K562 (cell line): ENCODE measurements at regions of chr22 and their contacts with region 1.

Region 1: DNA sequence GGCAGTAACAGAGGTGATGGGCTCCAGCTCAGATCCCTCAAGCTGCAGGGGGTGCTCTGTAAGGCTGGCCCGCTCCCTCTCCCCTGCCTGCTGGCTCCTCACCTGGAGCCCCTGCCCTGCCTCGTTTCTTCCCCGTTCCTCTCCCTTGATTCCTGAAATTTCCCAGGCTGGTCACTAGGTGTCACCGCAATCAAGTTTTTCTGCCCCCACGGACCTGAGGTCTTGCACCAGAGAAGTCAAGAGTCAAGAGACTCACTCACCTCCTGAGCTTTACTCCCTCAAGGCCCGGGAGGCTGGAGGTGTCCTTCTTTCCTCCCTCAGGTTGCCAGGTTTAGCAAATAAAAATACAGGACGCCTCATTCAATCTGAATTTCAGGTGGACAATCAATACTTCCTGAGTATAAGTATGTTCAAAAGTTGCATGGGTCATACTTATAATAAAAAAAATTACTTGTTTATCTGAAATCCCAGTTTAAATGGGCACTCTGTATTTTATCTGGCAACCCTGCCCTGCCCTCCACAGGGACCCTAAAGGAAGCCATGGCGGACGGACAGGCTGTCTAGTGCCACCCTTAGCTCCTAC is 69.2 kb downstream of the SCUBE1 start:
- DNase-seq: peak; percentile 58 to 69 (median 64)
- ATAC-seq: peak; percentile 82
- H3K4me3 ChIP-seq: no peak overlapping the region
- H3K27ac ChIP-seq: no peak overlapping the region
- H3K4me1 ChIP-seq: peaks cover 6 to 16% of the 10 kb centered on the region in 2 experiments; a peak in 3 of 5 replicates
- H3K27me3 ChIP-seq: peaks cover 15 to 46% of the 10 kb centered on the region in 2 experiments; a peak in 4 of 5 replicates
- CTCF ChIP-seq: peak; percentile 72 to 84 (median 74)
- EP300 ChIP-seq: no peak
- POLR2A ChIP-seq: no peak
- RAD21 ChIP-seq: peak; percentile 70 to 87

Region 2: DNA sequence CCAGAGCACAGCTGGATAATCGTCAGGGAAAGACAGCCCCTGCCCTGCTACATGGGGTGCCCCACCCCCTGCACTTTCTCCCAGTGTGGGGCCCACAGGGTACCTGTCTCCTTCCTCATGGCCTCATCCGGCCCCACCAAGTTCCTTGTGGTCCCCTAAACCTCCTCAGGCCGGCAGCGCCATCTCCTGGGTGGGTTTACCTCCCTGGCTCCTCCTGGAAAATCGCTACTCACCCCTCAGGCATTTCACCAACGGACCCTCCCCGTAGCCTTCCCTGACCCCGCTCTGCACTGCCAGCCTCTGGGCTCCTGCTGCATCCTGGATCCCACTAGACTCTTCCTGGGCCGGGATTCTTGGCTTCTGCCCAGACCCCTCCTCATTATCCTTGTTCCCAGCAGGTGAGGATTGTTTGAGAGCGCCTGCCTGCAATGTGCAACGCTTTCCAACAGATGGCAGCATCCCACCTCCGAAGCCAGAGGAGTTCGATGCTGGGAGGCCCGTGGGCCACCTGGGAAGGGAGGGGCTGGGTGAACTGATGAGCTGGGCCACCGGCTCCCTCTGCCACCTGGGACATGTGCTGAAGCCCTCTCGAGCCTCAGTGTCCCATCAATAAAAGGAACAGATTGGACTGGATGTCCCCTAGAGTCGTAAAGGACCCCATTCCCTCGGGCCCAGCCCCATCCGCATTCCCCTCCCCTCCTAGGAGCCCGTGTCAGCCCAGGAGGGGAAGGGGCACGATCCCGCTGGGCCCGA is 42.8 kb before region 1 on chr22:
- CTCF ChIA-PET with region 1: interaction called, 3 read pairs
- POLR2A ChIA-PET with region 1: no interaction called
- in situ Hi-C with region 1: no loop called
- intact Hi-C with region 1: loop called (anchors 5 kb)
- DNase-seq: peak; percentile 71 to 73 (median 73)
- ATAC-seq: peak; percentile 79
- H3K4me3 ChIP-seq: no peak overlapping the region
- H3K27ac ChIP-seq: no peak overlapping the region
- H3K4me1 ChIP-seq: peaks cover 0 to 41% of the 10 kb centered on the region in 2 experiments; a peak in 2 of 5 replicates
- H3K27me3 ChIP-seq: peaks cover 0 to 34% of the 10 kb centered on the region in 2 experiments; a peak in 2 of 5 replicates
- CTCF ChIP-seq: peak; percentile 74 to 95 (median 81)
- EP300 ChIP-seq: no peak
- POLR2A ChIP-seq: no peak
- RAD21 ChIP-seq: peak; percentile 80 to 89

Region 3: GRCh38 chr22:43346521-43346929 is 72.5 kb after region 1 on chr22:
- CTCF ChIA-PET with region 1: interaction called, 26 read pairs
- POLR2A ChIA-PET with region 1: no interaction called
- in situ Hi-C with region 1: no loop called
- intact Hi-C with region 1: loop called (anchors 1 kb)
- DNase-seq: peak; percentile 53 to 62 (median 58)
- ATAC-seq: peak; percentile 91
- H3K4me3 ChIP-seq: no peak overlapping the region
- H3K27ac ChIP-seq: no peak overlapping the region
- H3K4me1 ChIP-seq: peaks cover 9 to 21% of the 10 kb centered on the region in 2 experiments; a peak in 4 of 5 replicates
- H3K27me3 ChIP-seq: peaks cover 0 to 17% of the 10 kb centered on the region in 2 experiments; a peak in 4 of 5 replicates
- CTCF ChIP-seq: peak; percentile 69 to 72 (median 72)
- EP300 ChIP-seq: no peak
- POLR2A ChIP-seq: no peak
- RAD21 ChIP-seq: peak; percentile 50 to 80

Region 4: GRCh38 chr22:43377896-43378704 is 104.1 kb after region 1 on chr22:
- CTCF ChIA-PET with region 1: no interaction called
- POLR2A ChIA-PET with region 1: interaction called, 3 read pairs
- in situ Hi-C with region 1: loop called (anchors 10 kb)
- intact Hi-C with region 1: no loop called
- DNase-seq: no peak
- ATAC-seq: no peak
- H3K4me3 ChIP-seq: no peak overlapping the region
- H3K27ac ChIP-seq: no peak overlapping the region
- H3K4me1 ChIP-seq: no peaks in the 10 kb centered on the region
- H3K27me3 ChIP-seq: peaks cover 5 to 10% of the 10 kb centered on the region in 2 experiments; a peak in 2 of 5 replicates
- CTCF ChIP-seq: no peak
- EP300 ChIP-seq: no peak
- POLR2A ChIP-seq: no peak
- RAD21 ChIP-seq: no peak

Region 5: GRCh38 chr22:43385770-43386641 is 112.0 kb after region 1 on chr22:
- CTCF ChIA-PET with region 1: interaction called, 22 read pairs
- POLR2A ChIA-PET with region 1: interaction called, 4 read pairs
- in situ Hi-C with region 1: no loop called
- intact Hi-C with region 1: loop called (anchors 2 kb)
- DNase-seq: peak; percentile 72 to 75 (median 74)
- ATAC-seq: peak; percentile 98
- H3K4me3 ChIP-seq: no peak overlapping the region
- H3K27ac ChIP-seq: no peak overlapping the region
- H3K4me1 ChIP-seq: peaks cover 0 to 8% of the 10 kb centered on the region in 2 experiments; a peak in 2 of 5 replicates
- H3K27me3 ChIP-seq: peaks cover 0 to 5% of the 10 kb centered on the region in 2 experiments; a peak in 1 of 5 replicates
- CTCF ChIP-seq: peak; percentile 79 to 87 (median 86)
- EP300 ChIP-seq: no peak
- POLR2A ChIP-seq: no peak
- RAD21 ChIP-seq: peak; percentile 67 to 90